ENCODE measurements at regions of chr12 and their contacts with region 1.

Region 1: GRCh38 chr12:119412811-119413794 is 78.6 kb downstream of the CCDC60 start:
- DNase-seq: peak; percentile 54
- H3K4me3 Mint-ChIP-seq: no peak overlapping the region
- H3K27ac Mint-ChIP-seq: no peak overlapping the region
- H3K4me1 Mint-ChIP-seq: no peaks in the 10 kb centered on the region
- H3K27me3 Mint-ChIP-seq: peaks cover 28% of the 10 kb centered on the region
- CTCF ChIP-seq: peak; percentile 79

Region 2: GRCh38 chr12:118189741-118190191 is 1223.3 kb before region 1 on chr12:
- CTCF ChIA-PET with region 1: no interaction called
- POLR2A ChIA-PET with region 1: no interaction called
- intact Hi-C with region 1: loop called (anchors 10 kb)
- DNase-seq: no peak
- H3K4me3 Mint-ChIP-seq: no peak overlapping the region
- H3K27ac Mint-ChIP-seq: peak overlapping the region; percentile 63
- H3K4me1 Mint-ChIP-seq: peaks cover 24% of the 10 kb centered on the region
- H3K27me3 Mint-ChIP-seq: no peaks in the 10 kb centered on the region
- CTCF ChIP-seq: no peak

Region 3: DNA sequence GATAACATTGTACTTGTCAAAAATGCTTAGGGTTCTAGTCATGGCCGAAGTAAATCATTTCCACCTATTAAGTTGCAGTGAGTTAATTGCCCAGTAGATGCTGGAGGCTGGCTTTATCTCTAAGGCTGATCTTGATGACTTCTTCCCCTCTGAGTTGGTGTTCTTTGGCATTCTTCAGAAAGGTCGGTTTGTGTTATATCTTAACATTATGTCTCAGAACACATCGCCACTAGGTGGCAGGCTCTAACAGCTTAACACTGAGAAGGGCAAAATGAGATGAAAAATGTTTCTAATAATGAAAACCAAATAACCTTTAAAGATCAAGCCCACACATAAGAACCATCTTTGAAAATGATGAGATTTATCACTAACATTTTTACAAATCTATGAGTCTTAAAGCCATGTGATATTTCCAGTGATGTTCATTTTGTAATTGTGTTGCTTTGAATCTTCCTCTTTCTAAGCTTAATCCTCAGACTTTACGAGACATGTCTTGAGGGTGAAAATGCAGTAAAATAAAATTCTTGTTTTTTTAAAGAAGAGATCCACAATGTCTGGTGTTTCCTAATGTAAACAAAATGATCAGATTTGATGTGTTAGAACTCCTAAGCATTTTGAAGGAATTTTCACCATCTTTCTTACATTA is 1008.1 kb before region 1 on chr12:
- CTCF ChIA-PET with region 1: interaction called, 11 read pairs
- POLR2A ChIA-PET with region 1: no interaction called
- intact Hi-C with region 1: loop called (anchors 1 kb)
- DNase-seq: peak; percentile 73
- H3K4me3 Mint-ChIP-seq: no peak overlapping the region
- H3K27ac Mint-ChIP-seq: no peak overlapping the region
- H3K4me1 Mint-ChIP-seq: no peaks in the 10 kb centered on the region
- H3K27me3 Mint-ChIP-seq: no peaks in the 10 kb centered on the region
- CTCF ChIP-seq: peak; percentile 79

Region 4: GRCh38 chr12:119115296-119115905 is 297.7 kb before region 1 on chr12:
- CTCF ChIA-PET with region 1: interaction called, 13 read pairs
- POLR2A ChIA-PET with region 1: no interaction called
- intact Hi-C with region 1: loop called (anchors 1 kb)
- DNase-seq: peak; percentile 39
- H3K4me3 Mint-ChIP-seq: no peak overlapping the region
- H3K27ac Mint-ChIP-seq: no peak overlapping the region
- H3K4me1 Mint-ChIP-seq: no peaks in the 10 kb centered on the region
- H3K27me3 Mint-ChIP-seq: no peaks in the 10 kb centered on the region
- CTCF ChIP-seq: peak; percentile 70

Region 5: DNA sequence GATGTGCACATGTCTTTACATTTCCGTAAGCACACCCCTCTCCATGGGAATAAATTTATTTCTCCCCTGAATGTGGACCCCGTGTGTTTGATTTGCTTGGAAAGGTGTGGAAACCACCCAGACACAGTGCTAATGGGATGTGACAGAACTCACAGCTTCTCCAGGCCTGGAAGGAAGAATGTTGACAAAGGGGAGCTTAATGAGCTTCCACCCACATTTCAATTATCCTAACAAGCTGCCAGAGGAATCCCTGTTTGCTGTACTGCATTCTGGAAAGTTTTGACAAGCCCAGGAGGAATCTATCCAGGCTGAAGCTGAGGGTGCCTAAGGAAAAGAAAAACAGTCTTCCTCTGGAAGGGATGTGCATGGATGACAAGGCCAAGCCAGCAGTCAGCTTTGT is 129.8 kb before region 1 on chr12:
- CTCF ChIA-PET with region 1: no interaction called
- POLR2A ChIA-PET with region 1: no interaction called
- intact Hi-C with region 1: no loop called
- DNase-seq: no peak
- H3K4me3 Mint-ChIP-seq: no peak overlapping the region
- H3K27ac Mint-ChIP-seq: no peak overlapping the region
- H3K4me1 Mint-ChIP-seq: no peaks in the 10 kb centered on the region
- H3K27me3 Mint-ChIP-seq: no peaks in the 10 kb centered on the region
- CTCF ChIP-seq: no peak

Region 6: DNA sequence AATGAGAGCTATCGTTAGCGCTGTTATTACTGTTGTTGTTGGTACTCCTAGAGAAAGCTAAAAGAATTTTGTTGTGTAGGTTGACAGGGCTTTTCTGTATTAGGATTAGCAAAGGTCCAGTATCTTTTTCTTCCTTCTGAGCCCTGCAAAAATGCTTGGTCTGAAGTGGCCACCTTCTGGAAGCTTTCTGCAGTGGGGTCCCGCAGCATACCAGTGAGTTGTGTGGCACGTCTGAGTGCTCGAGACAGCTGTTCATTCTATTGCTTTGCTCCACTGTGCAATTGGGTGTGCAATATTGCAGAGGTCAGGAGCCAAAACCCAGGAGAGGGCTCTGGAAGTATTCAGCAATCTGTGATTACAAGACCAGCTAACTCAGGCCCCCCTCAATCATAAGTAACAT is 21.4 kb before region 1 on chr12:
- CTCF ChIA-PET with region 1: interaction called, 11 read pairs
- POLR2A ChIA-PET with region 1: no interaction called
- intact Hi-C with region 1: no loop called
- DNase-seq: no peak
- H3K4me3 Mint-ChIP-seq: no peak overlapping the region
- H3K27ac Mint-ChIP-seq: no peak overlapping the region
- H3K4me1 Mint-ChIP-seq: no peaks in the 10 kb centered on the region
- H3K27me3 Mint-ChIP-seq: no peaks in the 10 kb centered on the region
- CTCF ChIP-seq: no peak

Region 7: GRCh38 chr12:119399301-119399700 is 13.8 kb before region 1 on chr12:
- CTCF ChIA-PET with region 1: interaction called, 26 read pairs
- POLR2A ChIA-PET with region 1: no interaction called
- intact Hi-C with region 1: no loop called
- DNase-seq: no peak
- H3K4me3 Mint-ChIP-seq: no peak overlapping the region
- H3K27ac Mint-ChIP-seq: no peak overlapping the region
- H3K4me1 Mint-ChIP-seq: no peaks in the 10 kb centered on the region
- H3K27me3 Mint-ChIP-seq: no peaks in the 10 kb centered on the region
- CTCF ChIP-seq: no peak

Region 8: DNA sequence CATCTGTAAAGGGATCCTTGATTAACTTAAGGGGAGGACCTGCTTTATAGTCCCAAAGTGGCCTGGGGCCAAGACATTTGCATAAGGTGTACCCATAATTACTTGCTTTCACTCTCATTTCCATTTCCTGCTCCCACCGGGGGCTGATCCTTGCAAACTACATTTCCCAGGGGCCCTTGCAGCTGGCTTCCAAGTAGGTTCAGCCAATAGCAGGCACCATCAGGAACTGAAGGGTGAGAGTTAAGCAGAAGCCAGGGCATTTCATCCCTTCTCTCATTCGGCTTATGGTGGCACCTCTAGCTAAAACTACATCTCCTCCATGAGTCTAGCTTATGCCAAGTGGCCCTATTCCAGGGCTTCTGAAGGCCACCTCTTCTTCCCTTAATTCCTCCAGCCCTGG is 10.2 kb after region 1 on chr12:
- CTCF ChIA-PET with region 1: interaction called, 12 read pairs
- POLR2A ChIA-PET with region 1: no interaction called
- intact Hi-C with region 1: no loop called
- DNase-seq: no peak
- H3K4me3 Mint-ChIP-seq: no peak overlapping the region
- H3K27ac Mint-ChIP-seq: no peak overlapping the region
- H3K4me1 Mint-ChIP-seq: no peaks in the 10 kb centered on the region
- H3K27me3 Mint-ChIP-seq: no peaks in the 10 kb centered on the region
- CTCF ChIP-seq: no peak

Region 9: DNA sequence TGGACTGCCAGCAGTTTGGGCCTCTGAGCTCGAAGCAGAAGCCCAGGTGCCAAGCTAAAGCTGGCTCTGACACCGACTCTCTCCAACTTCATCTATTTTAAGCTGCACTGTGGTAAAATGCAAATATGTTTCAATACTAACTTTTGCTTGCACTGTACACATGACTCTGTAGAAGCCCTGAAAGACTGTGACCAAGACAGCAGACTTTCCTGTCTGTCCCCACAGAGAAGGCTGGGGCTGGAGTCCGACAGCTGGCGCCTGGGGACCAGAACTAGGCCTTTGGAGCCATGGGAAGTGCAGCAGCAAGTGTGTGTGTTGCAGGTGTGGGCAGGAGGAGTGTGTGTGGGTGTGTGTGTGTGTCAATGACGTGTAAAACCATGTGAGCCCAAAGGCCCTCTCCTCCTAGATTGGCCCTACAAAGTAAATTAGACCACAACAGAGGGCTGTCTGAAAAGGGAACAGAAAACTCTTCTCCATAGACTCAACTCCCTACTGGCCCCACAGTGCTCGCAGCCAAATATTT is 719.8 kb after region 1 on chr12:
- CTCF ChIA-PET with region 1: no interaction called
- POLR2A ChIA-PET with region 1: no interaction called
- intact Hi-C with region 1: no loop called
- DNase-seq: no peak
- H3K4me3 Mint-ChIP-seq: no peak overlapping the region
- H3K27ac Mint-ChIP-seq: no peak overlapping the region
- H3K4me1 Mint-ChIP-seq: no peaks in the 10 kb centered on the region
- H3K27me3 Mint-ChIP-seq: no peaks in the 10 kb centered on the region
- CTCF ChIP-seq: no peak

Measured in MCF 10A (cell line).